CD4-positive, alpha-beta memory T cell (primary cell): ENCODE measurements at regions of chr7 and their contacts with region 1.

Region 1: GRCh38 chr7:4775250-4775847 is at the start of gene AP5Z1:
- DNase-seq: peak; percentile 92 to 97 (median 94)
- H3K4me3 ChIP-seq: peak within 1 kb of the TSS; percentile 92 to 98
- H3K4me3 Mint-ChIP-seq: peak within 1 kb of the TSS; percentile 96 to 100 (median 98)
- H3K27ac ChIP-seq: peak within 1 kb of the TSS; percentile 93
- H3K27ac Mint-ChIP-seq: peak within 1 kb of the TSS; percentile 99 to 100 (median 99)
- H3K4me1 ChIP-seq: peaks cover 31% of the 10 kb centered on the region
- H3K4me1 Mint-ChIP-seq: peaks cover 29 to 50% (median 42%) of the 10 kb centered on the region in 4 donors
- H3K27me3 ChIP-seq: no peaks in the 10 kb centered on the region
- H3K27me3 Mint-ChIP-seq: no peaks in the 10 kb centered on the region
- total RNA-seq, gene AP5Z1: 100 to 103 TPM

Region 2: DNA sequence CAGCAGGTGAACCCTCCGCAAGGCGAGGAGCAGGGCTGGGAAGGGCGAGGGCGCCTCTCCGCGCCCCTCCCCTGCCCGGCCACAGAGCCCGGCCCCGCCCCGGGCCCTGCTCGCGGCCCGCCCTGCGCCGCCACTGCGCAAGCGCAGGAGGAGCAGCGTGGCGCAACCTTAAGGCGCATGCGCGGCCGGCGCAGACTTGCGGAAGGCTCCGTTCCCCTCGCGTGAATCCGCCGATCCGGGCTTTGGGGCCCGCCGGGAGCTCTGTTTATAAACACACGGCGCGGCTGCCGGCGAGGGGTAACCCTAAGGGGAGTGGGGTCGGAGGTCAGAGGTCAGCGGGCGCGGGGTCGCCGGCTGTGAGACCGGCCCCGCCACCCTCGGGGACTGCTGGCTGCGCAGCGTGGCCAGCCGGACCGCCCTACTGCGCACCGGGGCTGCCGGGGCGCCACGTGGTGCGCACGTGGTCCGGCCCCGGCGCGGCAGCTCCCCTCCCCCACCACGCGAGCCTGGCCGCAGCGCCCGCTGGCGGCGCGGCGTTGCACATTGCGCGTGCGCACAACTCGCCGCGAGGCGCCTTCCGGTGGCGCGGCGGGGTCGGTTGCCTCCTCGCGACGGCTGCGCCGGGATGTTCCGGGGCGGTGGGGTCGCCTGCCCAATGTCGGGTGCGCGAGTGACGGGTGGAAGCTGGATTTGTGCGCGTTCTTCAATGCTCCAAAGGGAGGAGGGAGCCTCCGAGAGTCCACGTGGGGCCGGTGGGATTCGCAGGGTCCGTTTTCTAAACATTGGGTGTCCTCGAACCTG is 133.5 kb before region 1 on chr7:
- CTCF ChIA-PET with region 1: interaction called, 11 read pairs
- POLR2A ChIA-PET with region 1: interaction called, 74 read pairs
- intact Hi-C with region 1: loop called (anchors 1 kb)
- DNase-seq: peak; percentile 94 to 99 (median 98)
- H3K4me3 ChIP-seq: peak overlapping the region; percentile 70 to 74
- H3K4me3 Mint-ChIP-seq: peak overlapping the region; percentile 83 to 92 (median 87)
- H3K27ac ChIP-seq: peak overlapping the region; percentile 60
- H3K27ac Mint-ChIP-seq: peak overlapping the region; percentile 93 to 97 (median 95)
- H3K4me1 ChIP-seq: peaks cover 16% of the 10 kb centered on the region
- H3K4me1 Mint-ChIP-seq: peaks cover 9 to 19% (median 14%) of the 10 kb centered on the region in 4 donors
- H3K27me3 ChIP-seq: no peaks in the 10 kb centered on the region
- H3K27me3 Mint-ChIP-seq: no peaks in the 10 kb centered on the region

Region 3: GRCh38 chr7:4744391-4745264 is 30.7 kb before region 1 on chr7:
- CTCF ChIA-PET with region 1: no interaction called
- POLR2A ChIA-PET with region 1: interaction called, 69 read pairs
- intact Hi-C with region 1: loop called (anchors 1 kb)
- DNase-seq: peak; percentile 75 to 84 (median 80)
- H3K4me3 ChIP-seq: peak overlapping the region; percentile 20 to 59
- H3K4me3 Mint-ChIP-seq: peak overlapping the region; percentile 80 to 91 (median 87)
- H3K27ac ChIP-seq: peak overlapping the region; percentile 63
- H3K27ac Mint-ChIP-seq: peak overlapping the region; percentile 86 to 99 (median 95)
- H3K4me1 ChIP-seq: peaks cover 66% of the 10 kb centered on the region
- H3K4me1 Mint-ChIP-seq: peaks cover 41 to 76% (median 58%) of the 10 kb centered on the region in 4 donors
- H3K27me3 ChIP-seq: no peaks in the 10 kb centered on the region
- H3K27me3 Mint-ChIP-seq: no peaks in the 10 kb centered on the region

Region 4: DNA sequence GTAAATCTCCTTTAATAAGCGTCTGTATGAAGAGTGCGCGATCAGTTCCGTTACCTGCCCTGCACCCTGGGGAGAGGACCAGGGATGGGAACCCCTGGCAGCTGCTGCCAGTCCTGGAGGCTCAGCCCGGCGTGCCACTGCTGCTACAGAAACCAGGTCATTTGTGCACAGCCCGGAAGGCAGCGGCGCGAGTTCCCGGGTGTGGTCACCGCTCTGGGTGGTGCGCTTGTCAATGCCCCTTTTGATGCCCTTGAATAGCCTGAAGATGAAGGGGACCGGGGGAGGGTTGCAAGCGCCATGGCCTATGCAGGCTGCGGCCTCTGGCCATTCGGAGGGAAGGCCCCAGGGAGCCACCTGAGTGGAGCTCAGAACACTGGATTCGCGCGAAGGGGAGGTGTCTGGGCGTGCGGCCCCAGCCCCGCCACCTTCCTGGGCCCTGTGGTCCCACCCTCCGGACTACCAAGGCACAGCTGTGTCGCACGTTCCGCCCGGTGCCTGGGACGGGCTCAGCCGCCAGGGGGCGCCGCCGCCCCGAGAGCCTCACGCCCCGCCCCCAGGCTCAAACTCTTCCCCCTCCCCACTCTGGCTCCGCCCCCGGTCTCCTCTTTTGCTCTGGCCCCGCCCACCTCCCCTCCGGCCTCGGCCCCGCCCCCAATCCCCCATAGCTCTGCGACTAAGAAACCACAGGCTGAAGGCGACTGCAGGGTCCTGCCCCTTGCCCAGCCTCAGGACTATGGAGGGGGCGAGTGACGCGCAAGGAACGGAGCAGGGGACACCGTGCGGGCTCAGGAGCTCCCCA is 16.6 kb after region 1 on chr7:
- CTCF ChIA-PET with region 1: interaction called, 43 read pairs
- POLR2A ChIA-PET with region 1: interaction called, 56 read pairs
- intact Hi-C with region 1: loop called (anchors 1 kb)
- DNase-seq: peak; percentile 65 to 79 (median 76)
- H3K4me3 ChIP-seq: peak overlapping the region in 1 of 2 donors; percentile 32
- H3K4me3 Mint-ChIP-seq: peak overlapping the region in 4 of 8 donors; percentile 19 to 57 (median 32)
- H3K27ac ChIP-seq: no peak overlapping the region
- H3K27ac Mint-ChIP-seq: peak overlapping the region in 3 of 7 donors; percentile 2 to 66 (median 48)
- H3K4me1 ChIP-seq: peaks cover 5% of the 10 kb centered on the region
- H3K4me1 Mint-ChIP-seq: peaks cover 1 to 12% (median 9%) of the 10 kb centered on the region in 4 donors
- H3K27me3 ChIP-seq: no peaks in the 10 kb centered on the region
- H3K27me3 Mint-ChIP-seq: no peaks in the 10 kb centered on the region

Region 5: DNA sequence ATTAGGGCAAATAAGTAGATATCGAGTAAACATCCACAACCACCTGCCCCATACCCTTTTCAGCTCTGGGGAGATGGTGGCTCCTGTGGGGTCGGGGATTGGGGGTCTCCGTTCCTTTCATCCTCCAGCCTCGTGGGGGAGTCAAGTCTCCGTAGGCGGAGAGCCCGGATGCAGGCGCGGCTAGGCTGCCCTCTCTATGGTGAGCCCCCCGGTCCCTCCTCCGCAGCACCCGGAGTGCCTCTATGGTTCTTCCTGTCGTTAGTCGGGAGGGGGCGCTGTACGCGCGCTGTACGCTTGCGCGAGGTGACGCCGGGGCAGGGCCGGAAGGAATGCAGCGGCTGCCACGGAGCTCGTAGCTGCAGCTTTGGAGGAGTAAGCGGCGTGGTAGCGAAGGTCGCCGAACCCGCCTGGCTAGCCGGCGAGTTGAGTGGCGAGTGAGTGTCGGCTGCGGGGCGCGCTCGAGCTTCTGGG is 198.4 kb after region 1 on chr7:
- CTCF ChIA-PET with region 1: interaction called, 5 read pairs
- POLR2A ChIA-PET with region 1: interaction called, 9 read pairs
- intact Hi-C with region 1: loop called (anchors 5 kb)
- DNase-seq: peak; percentile 91 to 95 (median 94)
- H3K4me3 ChIP-seq: peak overlapping the region in 1 of 2 donors; percentile 74
- H3K4me3 Mint-ChIP-seq: peak overlapping the region; percentile 94 to 99 (median 98)
- H3K27ac ChIP-seq: peak overlapping the region; percentile 64
- H3K27ac Mint-ChIP-seq: peak overlapping the region; percentile 93 to 99 (median 97)
- H3K4me1 ChIP-seq: peaks cover 16% of the 10 kb centered on the region
- H3K4me1 Mint-ChIP-seq: peaks cover 19 to 37% (median 28%) of the 10 kb centered on the region in 4 donors
- H3K27me3 ChIP-seq: no peaks in the 10 kb centered on the region
- H3K27me3 Mint-ChIP-seq: no peaks in the 10 kb centered on the region